Activated T-helper 1 cell treated with anti-CD3 and anti-CD28 coated beads, Interleukin-12 subunit alpha, Interleukin-12 subunit beta, Interleukin-2, Interleukin-4 antibody, amounts not matched to agents 30 ng/mL and 10 ng/mL and 1 ng/mL, durations not matched to agents 14 hours and 24 hours and 36 hours (primary cell): ENCODE measurements at regions of chr3 and their contacts with region 1.

Region 1: DNA sequence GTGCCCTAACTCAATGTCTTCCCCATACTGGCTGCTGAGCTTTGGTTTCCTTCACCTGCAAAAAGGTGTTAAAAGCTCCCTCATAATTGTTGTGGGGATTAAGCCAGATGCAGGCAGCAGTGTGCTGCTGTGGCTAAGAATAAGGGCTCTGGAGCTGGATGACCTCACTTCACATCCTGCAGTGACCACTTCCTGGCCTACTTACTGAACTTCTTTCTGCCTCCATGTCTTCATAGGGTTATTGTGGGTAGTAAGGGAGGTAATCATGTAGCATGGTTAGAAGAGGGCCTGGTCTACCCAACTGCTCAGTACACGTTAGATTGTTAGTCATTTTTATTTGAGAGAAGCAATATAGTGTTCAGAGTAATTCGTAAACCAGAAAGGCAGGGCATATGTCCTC is 18.4 kb downstream of the GYG1 start:
- DNase-seq: peak; percentile 47
- H3K4me3 Mint-ChIP-seq: no peak overlapping the region
- H3K27ac Mint-ChIP-seq: peak overlapping the region; percentile 71
- H3K4me1 Mint-ChIP-seq: peaks cover 36% of the 10 kb centered on the region
- H3K27me3 Mint-ChIP-seq: no peaks in the 10 kb centered on the region

Region 2: GRCh38 chr3:148998715-148999423 is 10.9 kb before region 1 on chr3:
- intact Hi-C with region 1: loop called (anchors 1 kb)
- DNase-seq: no peak
- H3K4me3 Mint-ChIP-seq: peak overlapping the region; percentile 26
- H3K27ac Mint-ChIP-seq: peak overlapping the region; percentile 46
- H3K4me1 Mint-ChIP-seq: peaks cover 55% of the 10 kb centered on the region
- H3K27me3 Mint-ChIP-seq: no peaks in the 10 kb centered on the region